Calu3 (cell line): ENCODE measurements at regions of chr3 and their contacts with region 1.

Region 1: DNA sequence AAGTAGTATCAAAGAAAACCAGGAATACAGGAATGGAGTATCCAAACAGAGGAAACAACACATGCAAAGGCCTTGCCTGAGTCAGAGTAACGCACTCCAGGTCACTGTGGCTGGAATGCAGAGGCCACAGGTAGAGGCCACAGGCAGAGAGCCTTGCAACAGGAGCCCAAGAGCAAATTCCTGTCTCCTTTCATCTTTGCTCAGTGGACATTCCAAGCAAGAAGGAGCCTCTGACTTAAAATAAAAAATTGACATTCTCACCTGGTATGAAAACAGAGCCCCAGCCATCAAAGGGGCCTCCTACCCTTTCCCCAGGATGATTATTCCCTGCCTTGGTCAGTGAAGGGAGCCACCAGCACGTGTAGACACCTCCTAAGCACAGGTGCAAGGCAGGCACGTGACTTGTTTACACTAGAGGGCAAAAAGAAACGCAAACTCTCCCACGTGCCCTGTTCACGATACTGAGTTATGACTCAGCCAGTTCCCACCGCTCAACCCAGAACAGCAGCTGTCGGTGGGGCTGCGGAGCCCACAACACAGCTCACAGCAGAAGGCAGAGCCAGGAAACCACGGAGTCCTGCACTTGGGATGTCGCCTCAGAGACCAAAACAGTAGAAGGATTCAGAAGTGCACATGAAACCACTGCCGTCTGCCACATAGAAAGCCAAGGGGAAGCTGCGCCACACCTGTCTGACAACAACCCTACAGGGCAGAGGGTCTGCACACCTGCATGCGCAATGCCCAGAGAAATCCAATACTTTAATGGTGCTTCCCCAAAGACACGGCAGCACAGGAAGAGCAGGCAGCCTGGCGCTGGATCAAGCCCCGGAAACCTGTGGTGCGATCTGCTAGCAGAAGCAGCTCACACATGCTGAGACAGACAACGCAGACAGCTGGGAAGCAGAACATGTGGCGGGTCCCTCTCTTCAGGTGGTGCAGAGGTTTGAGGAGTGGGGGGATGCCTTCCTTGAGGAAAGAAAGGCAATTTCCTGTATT is 52.1 kb downstream of the ITGB5 start:
- DNase-seq: peak; percentile 80
- H3K4me3 Mint-ChIP-seq: peak overlapping the region; percentile 63
- H3K27ac Mint-ChIP-seq: peak overlapping the region; percentile 79
- H3K4me1 Mint-ChIP-seq: peaks cover 77% of the 10 kb centered on the region
- H3K27me3 Mint-ChIP-seq: no peaks in the 10 kb centered on the region
- CTCF ChIP-seq: no peak

Region 2: DNA sequence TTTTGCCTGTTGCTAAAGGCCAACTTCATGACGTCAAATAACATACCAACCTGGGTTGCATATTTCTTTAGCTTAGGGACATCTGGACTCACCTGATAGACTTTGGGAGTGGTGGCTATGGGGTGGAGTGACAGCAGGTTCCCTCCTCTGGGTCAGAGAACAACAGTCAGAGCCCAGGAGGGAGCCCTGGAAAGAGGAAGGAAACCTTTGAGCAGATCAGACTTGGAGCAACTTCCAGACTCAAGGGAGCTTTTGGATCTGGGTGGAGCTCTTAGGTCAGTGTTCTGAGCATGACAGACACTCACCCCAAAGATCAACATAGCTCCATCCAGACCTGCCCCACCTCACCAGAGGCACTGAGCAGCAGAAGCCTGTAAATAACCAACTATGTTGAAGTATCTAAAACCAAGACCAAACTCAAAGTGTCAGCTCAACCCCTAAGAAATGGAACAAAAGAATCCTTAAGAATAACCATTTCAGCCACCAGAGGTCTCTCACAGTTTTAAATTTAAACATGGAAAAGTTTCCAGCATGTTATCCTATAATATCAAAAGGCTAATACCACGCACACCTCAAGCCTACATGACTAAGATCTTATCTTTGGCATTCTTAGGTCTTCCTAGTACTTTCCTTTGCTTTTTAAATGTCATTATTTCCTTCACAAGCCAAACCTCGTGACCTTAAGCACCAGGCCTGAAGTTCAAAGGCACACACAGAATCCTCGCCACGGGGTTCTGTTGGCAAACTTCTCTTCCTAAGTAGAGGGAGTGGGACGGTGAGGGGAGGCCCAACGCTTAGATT is 48.4 kb before region 1 on chr3:
- CTCF ChIA-PET with region 1: interaction called, 3 read pairs
- intact Hi-C with region 1: loop called (anchors 2 kb)
- DNase-seq: peak; percentile 8
- H3K4me3 Mint-ChIP-seq: no peak overlapping the region
- H3K27ac Mint-ChIP-seq: peak overlapping the region; percentile 8
- H3K4me1 Mint-ChIP-seq: peaks cover 12% of the 10 kb centered on the region
- H3K27me3 Mint-ChIP-seq: no peaks in the 10 kb centered on the region
- CTCF ChIP-seq: no peak

Region 3: DNA sequence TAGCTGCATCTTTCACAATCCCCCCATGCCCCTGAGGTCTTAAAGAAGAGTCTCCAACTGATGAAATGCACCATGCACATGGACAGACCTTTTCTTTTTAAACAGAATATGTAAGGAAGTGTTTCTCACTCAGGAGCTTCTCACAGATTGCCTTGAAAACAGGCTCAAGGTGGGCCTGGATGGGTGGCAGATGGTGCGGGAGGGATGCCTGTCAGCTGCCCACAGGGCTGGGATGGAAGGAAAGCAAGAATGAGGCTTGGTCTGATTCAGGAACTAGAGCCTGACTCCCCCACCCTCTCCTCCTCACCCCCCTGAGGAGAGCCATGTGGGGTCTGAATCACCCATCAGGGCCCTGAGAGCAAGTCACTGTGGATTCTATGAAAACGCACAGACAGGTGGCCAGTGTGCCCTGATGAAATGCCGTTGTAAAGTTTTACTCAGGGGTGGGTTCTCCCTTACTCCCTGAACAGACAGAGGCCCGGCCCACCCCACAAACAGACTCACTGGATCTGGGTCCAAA is 37.5 kb before region 1 on chr3:
- CTCF ChIA-PET with region 1: no interaction called
- intact Hi-C with region 1: no loop called
- DNase-seq: no peak
- H3K4me3 Mint-ChIP-seq: no peak overlapping the region
- H3K27ac Mint-ChIP-seq: no peak overlapping the region
- H3K4me1 Mint-ChIP-seq: peaks cover 20% of the 10 kb centered on the region
- H3K27me3 Mint-ChIP-seq: no peaks in the 10 kb centered on the region
- CTCF ChIP-seq: no peak

Region 4: DNA sequence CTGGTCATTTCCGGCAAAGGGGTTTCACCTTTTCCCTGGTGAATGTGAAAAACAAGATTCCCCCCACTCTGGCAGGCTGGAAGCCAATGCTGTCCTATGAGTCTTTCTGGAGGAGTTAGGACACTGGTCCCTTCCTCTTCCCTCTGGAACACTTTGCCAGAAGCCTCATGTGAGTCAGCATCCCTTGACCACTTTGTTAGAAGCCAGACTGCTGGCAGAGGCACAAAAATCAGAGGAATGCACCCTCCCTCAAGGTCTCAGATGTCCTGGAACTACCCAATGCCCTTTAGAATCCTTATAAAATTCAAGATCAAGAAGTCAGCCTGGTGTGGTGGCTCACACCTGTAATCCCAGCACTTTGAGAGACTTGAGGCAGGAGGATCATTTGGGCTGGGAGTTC is 25.6 kb after region 1 on chr3:
- CTCF ChIA-PET with region 1: interaction called, 3 read pairs
- intact Hi-C with region 1: loop called (anchors 2 kb)
- DNase-seq: peak; percentile 77
- H3K4me3 Mint-ChIP-seq: peak overlapping the region; percentile 2
- H3K27ac Mint-ChIP-seq: peak overlapping the region; percentile 37
- H3K4me1 Mint-ChIP-seq: peaks cover 52% of the 10 kb centered on the region
- H3K27me3 Mint-ChIP-seq: no peaks in the 10 kb centered on the region
- CTCF ChIP-seq: no peak

Region 5: DNA sequence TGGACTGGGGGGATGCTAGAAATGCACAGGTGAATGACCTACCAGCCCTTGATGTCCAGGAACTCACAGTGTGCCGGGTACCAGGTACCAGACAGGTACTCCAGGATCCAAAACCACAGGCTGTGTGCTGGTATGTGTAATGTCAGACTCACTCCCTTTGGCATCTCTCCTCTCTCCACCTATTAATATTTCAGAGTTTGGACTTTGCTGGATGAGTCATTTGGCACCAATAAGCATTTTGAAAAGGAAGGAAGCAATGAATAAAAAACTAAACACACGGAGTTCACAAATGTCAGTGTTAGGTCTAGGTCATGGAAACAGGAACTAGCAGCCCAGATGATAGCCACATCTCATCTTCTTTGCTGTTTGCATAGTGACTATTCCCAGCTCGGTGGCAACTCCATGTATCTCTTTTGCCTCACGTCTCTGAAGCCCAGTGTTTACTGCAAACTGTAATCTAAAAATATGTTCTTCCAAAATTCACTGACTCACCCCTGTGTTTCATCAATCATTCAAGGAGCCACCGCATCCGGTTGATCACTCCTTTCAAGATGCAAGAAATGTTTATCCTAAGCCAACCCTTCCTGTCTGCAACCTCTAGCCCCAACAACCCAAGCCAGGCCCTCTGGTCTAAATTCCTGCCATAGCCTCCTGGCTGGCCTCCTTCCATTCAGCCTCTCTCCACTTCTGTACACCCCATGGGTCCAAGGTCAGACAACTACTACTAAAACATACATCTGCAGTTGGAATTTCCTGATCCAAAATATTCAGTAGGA is 43.7 kb after region 1 on chr3:
- CTCF ChIA-PET with region 1: interaction called, 4 read pairs
- intact Hi-C with region 1: loop called (anchors 2 kb)
- DNase-seq: peak; percentile 72
- H3K4me3 Mint-ChIP-seq: peak overlapping the region; percentile 29
- H3K27ac Mint-ChIP-seq: peak overlapping the region; percentile 83
- H3K4me1 Mint-ChIP-seq: peaks cover 69% of the 10 kb centered on the region
- H3K27me3 Mint-ChIP-seq: no peaks in the 10 kb centered on the region
- CTCF ChIP-seq: no peak

Region 6: GRCh38 chr3:124893526-124893925 is 58.5 kb after region 1 on chr3:
- CTCF ChIA-PET with region 1: no interaction called
- intact Hi-C with region 1: no loop called
- DNase-seq: no peak
- H3K4me3 Mint-ChIP-seq: no peak overlapping the region
- H3K27ac Mint-ChIP-seq: no peak overlapping the region
- H3K4me1 Mint-ChIP-seq: peaks cover 19% of the 10 kb centered on the region
- H3K27me3 Mint-ChIP-seq: no peaks in the 10 kb centered on the region
- CTCF ChIP-seq: no peak

Region 7: DNA sequence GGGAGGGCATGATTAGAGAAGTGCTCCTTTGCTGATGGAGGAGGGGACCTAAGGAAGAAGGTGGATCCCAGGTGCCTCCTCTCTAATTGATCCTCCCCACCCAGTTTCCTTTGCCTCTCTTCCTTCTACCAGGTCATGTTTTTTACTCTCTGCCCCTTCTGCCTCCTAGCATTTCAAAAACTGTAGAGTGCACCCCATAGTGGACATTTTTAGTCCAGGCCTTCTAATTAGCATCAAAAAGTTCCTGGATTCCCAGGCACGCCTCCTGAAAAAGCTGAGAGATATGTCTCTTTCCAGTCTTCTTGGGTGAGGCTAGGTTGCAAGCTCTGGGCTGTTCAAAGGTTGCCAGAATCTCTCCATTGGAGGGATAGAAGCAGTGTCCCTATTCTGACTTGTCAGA is 70.8 kb after region 1 on chr3:
- CTCF ChIA-PET with region 1: interaction called, 9 read pairs
- intact Hi-C with region 1: loop called (anchors 2 kb)
- DNase-seq: no peak
- H3K4me3 Mint-ChIP-seq: no peak overlapping the region
- H3K27ac Mint-ChIP-seq: no peak overlapping the region
- H3K4me1 Mint-ChIP-seq: peaks cover 9% of the 10 kb centered on the region
- H3K27me3 Mint-ChIP-seq: no peaks in the 10 kb centered on the region
- CTCF ChIP-seq: no peak